Dendritic cell treated with granulocyte-macrophage colony-stimulating factor and Interleukin-4, amounts not matched to agents 40 ng/mL and 50 ng/mL, for 4 days (primary cell): ENCODE measurements at regions of chr7 and their contacts with region 1.

Region 1: GRCh38 chr7:73683056-73683964 is at the starts of genes BUD23 and DNAJC30:
- H3K4me3 Mint-ChIP-seq: peak within 1 kb of the TSS; percentile 94
- H3K27ac Mint-ChIP-seq: peak within 1 kb of the TSS; percentile 95
- H3K4me1 Mint-ChIP-seq: peaks cover 37% of the 10 kb centered on the region
- H3K27me3 Mint-ChIP-seq: no peaks in the 10 kb centered on the region

Region 2: DNA sequence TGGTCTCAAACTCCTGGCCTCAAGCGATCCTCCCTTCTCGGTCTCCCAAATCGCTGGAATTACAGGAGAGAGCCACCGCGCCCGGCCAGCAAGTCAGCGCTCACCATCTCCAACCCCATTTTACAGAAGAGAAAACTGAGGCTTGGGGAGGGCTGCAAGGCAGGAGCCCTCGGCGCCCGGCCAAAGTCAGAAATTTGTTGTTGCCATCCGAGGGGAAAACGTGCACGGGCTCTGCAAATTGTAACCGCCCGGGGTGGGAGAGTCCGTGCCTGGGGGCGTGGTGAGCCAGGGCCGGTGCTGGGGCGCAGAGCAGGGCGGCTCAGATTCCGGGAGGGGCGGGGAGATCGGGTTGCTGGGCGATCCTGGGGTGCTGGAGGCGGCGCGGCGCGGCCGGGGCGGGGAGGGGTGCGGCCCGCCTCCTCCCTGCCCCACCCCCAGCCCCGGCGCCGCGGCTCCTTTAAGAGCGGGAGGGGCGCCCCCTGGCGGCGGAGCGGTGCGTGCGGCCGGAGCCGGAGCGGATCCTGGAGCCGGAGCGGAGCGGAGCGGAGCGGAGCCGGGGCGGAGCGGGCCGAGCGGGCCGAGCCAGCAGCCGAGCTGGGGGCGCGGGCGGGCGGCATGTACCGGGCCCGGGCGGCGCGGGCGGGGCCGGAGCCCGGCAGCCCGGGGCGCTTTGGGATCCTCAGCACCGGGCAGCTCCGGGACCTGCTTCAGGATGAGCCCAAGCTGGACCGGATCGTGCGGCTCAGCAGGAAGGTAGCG is 15.8 kb before region 1 on chr7 and contains the start of gene VPS37D:
- intact Hi-C with region 1: loop called (anchors 1 kb)
- H3K4me3 Mint-ChIP-seq: peak within 1 kb of the TSS; percentile 63
- H3K27ac Mint-ChIP-seq: no peak within 1 kb of the TSS
- H3K4me1 Mint-ChIP-seq: peaks cover 22% of the 10 kb centered on the region
- H3K27me3 Mint-ChIP-seq: peaks cover 83% of the 10 kb centered on the region

Region 3: GRCh38 chr7:73718905-73719805 is 35.8 kb after region 1 on chr7 and contains the start of gene STX1A:
- intact Hi-C with region 1: loop called (anchors 1 kb)
- H3K4me3 Mint-ChIP-seq: peak within 1 kb of the TSS; percentile 73
- H3K27ac Mint-ChIP-seq: no peak within 1 kb of the TSS
- H3K4me1 Mint-ChIP-seq: peaks cover 41% of the 10 kb centered on the region
- H3K27me3 Mint-ChIP-seq: peaks cover 85% of the 10 kb centered on the region

Region 4: GRCh38 chr7:73738612-73739374 is 55.5 kb after region 1 on chr7 and contains the start of gene ABHD11:
- intact Hi-C with region 1: loop called (anchors 2 kb)
- H3K4me3 Mint-ChIP-seq: peak within 1 kb of the TSS; percentile 97
- H3K27ac Mint-ChIP-seq: peak within 1 kb of the TSS; percentile 96
- H3K4me1 Mint-ChIP-seq: peaks cover 39% of the 10 kb centered on the region
- H3K27me3 Mint-ChIP-seq: peaks cover 34% of the 10 kb centered on the region